ENCODE measurements at regions of chr11 and their contacts with region 1.

Region 1: DNA sequence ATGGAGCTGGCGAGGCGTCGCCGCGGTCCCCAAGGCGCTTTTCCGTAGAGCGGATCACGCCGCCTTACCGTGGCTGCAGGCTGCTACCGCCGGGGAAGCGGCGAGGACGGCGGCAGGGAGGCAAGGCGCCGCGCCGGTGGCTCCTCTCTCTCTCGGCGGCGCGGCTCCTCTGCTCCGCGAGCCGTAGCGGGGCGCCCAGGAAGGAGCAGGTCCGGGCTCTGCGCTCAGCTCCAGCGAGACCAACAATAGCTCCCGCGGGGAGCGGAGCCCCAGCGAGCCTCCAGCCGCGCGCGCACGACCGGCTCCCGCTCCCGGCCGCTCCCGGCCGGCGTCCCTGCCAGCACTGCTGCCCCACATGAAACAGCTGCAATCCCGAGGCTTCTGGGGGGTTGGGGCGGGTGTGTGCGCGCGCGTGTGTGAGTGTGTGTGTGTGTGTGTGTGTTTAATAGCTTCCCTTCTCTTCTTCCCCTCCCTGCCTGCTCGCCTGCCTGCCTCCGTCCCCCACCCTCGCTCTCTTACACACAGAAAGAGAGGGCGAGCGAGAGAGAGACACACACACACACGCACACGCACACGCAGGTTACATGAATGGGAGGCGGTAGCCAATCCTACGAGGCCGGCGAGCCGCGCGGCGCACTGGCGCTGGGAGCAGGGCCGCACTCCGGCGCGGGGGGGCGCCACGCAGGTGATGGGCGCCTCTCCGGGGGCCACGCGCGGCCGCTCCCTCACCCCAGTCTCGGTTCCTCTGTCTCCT is at the start of gene TENM4:
- ATAC-seq: peak; percentile 52 to 82 (median 76)
- H3K4me3 ChIP-seq: peak within 1 kb of the TSS; percentile 56 to 86 (median 66)
- H3K27ac ChIP-seq: peak within 1 kb of the TSS; percentile 67 to 81
- H3K4me1 ChIP-seq: peaks cover 11 to 16% of the 10 kb centered on the region in 2 donors
- total RNA-seq, gene TENM4: 0.59 to 82.2 (median 24.2) TPM

Region 2: DNA sequence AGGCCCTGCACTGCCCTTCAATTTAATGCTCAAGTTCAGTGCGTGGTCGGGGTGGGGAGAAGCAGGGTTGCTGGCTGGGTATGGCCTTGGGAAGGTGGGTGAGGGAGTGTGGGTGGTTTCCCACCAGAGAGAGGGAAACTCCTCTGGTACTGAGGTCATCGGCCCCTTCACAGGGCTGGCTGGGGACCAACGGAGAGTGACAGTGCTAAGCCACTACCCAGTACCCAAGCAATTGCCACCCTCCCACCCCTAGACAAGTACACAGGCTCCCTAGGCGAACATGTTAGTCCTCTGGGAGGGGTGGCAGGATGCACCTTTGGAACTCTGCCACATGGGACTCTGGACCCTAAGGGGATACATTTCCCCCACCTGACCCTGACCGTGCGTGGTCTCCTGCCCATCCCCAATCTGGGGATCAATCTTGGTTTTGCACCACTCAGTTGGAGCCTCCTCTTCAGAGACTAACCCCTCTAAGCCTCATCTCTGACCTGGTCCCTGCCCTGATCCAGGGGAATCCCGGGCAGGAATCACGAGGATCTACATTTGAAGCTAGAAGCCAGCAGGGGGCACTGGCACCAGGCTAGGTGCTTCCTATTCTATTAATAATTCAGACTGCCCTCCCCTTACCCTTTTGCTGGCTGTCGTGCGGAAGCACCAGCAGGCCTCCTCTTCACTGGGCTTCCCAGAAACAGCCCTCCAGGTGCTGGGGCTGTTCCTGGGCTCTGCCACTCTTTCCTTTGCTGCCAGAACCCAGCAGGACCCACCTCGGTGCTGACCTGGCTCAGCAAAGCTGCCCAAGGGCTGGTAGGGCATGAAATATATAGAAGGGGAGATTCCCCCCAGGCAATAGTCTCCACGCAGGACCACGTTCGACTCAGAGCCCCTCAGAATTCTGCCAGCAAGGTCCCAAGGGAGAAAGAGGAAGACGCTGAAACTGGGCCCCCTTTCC is 377.5 kb before region 1 on chr11:
- in situ Hi-C with region 1: loop called in 1 of 9 experiments (anchors 25 kb)
- ATAC-seq: peak in 7 of 8 experiments; percentile 23 to 54 (median 40)
- H3K4me3 ChIP-seq: no peak overlapping the region
- H3K27ac ChIP-seq: peak overlapping the region in 1 of 2 donors; percentile 66
- H3K4me1 ChIP-seq: peaks cover 52 to 59% of the 10 kb centered on the region in 2 donors